ENCODE measurements at regions of chr9 and their contacts with region 1.

Region 1: DNA sequence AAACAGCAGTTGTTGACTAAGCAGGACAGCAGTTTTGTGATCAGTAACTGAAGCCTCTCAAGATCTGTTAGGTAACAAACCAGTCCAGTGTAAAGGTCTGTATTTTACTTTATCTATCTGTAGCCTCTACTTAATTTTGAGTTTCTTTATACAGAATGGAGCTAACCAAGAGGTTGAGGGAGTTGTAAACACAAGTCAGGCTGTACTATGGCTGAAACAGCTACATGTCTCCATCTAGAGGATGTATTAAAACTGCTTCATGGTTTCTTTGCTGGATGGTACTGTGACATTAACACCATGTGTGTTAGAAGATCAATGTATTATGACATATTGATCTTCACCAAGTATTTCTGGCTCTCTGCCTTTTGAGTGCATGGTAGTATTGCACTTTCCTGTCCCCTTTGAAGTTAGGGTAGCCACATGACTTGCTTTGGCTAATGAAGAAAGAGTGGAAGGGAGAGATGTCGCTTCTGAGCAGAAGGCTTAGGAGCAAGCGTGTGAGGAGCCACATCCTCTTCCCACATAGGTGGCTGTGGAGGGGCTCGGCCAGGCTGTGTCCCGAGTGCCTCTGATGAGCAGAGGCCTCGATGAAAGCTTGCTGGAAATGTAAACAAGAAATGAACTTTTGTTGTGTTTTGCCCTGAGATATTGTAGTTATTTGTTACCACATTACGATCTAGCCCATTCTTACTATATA is 105.6 kb upstream of the PCA3 start:
- DNase-seq: peak; percentile 48
- H3K4me3 ChIP-seq: no peak overlapping the region
- H3K27ac ChIP-seq: no peak overlapping the region
- H3K4me1 ChIP-seq: peaks cover 15% of the 10 kb centered on the region
- H3K27me3 ChIP-seq: no peaks in the 10 kb centered on the region
- CTCF ChIP-seq: peak; percentile 76 to 80

Region 2: DNA sequence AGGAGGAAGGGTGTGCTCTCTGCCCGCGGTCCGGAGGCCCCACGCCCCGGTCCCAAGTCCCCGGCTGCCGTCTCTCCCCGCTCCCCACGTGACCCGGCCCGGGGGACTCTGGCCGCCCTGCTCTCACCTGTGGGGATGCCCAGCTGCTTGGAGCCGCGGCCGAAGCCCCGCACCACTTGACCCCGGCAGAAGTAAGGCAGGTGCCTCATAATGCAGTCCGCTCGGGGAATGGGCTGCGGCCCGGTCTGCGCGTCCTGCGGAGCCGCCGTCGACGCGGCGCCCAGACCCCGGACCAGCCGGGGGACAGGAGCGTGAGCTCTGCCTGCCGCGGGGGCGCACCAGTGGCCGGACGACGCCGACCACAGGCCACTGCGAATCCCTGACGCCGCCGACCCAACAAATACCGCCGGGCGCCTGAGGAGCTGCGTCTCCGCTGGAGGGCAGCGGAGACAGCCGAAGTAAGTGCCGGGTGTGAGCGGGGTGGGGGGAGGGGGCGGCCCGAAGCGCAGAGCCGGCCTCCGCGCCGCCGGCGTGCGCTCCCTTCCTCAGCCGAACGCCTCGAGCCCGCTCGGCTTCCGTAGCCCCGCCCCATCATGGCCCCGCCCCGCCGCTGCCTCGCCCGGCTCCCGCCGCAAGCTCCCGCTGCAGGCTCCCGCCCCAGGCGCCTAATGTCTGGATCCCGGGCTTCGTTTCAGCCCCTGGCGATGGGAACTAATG is 264.6 kb before region 1 on chr9 and contains the start of gene RFK:
- CTCF ChIA-PET with region 1: interaction called, 13 read pairs
- dilution Hi-C with region 1: no loop called
- in situ Hi-C with region 1: no loop called
- intact Hi-C with region 1: loop called (anchors 2 kb)
- DNase-seq: peak; percentile 91
- H3K4me3 ChIP-seq: peak within 1 kb of the TSS; percentile 73 to 93 (median 91)
- H3K27ac ChIP-seq: peak within 1 kb of the TSS; percentile 95
- H3K4me1 ChIP-seq: peaks cover 8% of the 10 kb centered on the region
- H3K27me3 ChIP-seq: no peaks in the 10 kb centered on the region
- CTCF ChIP-seq: peak; percentile 14 to 48
- total RNA-seq, gene RFK: 18.2 to 32.3 TPM

Region 3: DNA sequence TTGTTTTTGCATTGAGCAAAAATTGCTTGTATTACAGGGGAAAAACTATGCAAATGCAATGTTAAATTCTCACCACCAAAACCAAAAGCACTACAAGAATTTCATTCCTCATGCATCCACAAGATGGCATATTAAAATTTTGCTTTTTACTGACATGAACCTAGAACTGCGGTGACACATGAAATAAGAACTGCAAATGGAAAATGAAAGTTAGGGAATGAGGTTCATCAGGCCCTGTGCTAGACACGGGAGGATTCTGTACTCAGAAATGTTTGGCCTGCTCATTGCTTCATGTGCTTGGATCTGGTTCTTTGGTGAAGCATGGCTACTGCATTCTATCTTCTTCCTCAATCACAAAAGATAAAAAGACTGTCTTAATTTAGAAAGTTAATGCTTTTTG is 255.3 kb before region 1 on chr9:
- CTCF ChIA-PET with region 1: no interaction called
- dilution Hi-C with region 1: no loop called
- in situ Hi-C with region 1: no loop called
- intact Hi-C with region 1: loop called (anchors 1 kb)
- DNase-seq: peak; percentile 69
- H3K4me3 ChIP-seq: peak overlapping the region in 2 of 3 experiments; percentile 1 to 17
- H3K27ac ChIP-seq: peak overlapping the region; percentile 1
- H3K4me1 ChIP-seq: peaks cover 3% of the 10 kb centered on the region
- H3K27me3 ChIP-seq: no peaks in the 10 kb centered on the region
- CTCF ChIP-seq: peak; percentile 51 to 60

Region 4: DNA sequence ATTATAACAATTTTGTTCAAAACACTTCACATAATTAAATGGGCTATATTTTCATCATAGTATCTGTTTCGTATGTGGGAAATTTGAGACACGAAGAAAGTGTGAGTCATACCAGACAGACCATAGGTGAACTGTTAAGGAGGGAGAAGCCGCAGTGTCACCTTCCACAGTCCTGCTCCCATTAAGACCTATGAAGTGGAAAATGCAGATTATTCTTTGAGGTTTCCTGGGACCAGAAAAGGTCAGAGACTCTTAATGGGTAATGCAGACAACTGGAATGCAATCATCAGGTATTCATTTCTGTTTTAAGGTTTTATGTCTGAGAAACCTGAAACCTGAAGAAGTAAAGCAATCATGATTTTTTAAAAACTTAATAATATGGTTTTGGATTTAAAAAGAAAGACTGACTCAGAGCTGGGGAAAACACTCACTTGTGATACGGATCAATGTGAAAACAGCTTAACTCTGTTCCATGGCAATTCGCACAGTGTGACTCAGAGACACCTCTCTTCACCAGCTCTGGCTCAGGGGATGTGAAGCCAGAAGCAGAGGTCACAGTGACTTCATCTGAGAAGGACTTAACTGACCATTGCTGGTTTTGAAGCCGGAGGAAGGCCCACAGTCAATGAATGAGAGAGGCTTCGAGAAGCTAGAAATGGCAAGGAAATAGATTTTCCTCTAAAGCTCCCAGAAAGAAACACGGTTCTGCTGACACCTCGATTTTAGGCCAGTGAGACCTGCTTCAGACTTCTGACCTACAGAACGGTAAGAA is 216.9 kb before region 1 on chr9:
- CTCF ChIA-PET with region 1: no interaction called
- dilution Hi-C with region 1: no loop called
- in situ Hi-C with region 1: loop called in 1 of 2 experiments (anchors 5 kb)
- intact Hi-C with region 1: no loop called
- DNase-seq: peak; percentile 40
- H3K4me3 ChIP-seq: no peak overlapping the region
- H3K27ac ChIP-seq: no peak overlapping the region
- H3K4me1 ChIP-seq: no peaks in the 10 kb centered on the region
- H3K27me3 ChIP-seq: no peaks in the 10 kb centered on the region
- CTCF ChIP-seq: no peak

Region 5: DNA sequence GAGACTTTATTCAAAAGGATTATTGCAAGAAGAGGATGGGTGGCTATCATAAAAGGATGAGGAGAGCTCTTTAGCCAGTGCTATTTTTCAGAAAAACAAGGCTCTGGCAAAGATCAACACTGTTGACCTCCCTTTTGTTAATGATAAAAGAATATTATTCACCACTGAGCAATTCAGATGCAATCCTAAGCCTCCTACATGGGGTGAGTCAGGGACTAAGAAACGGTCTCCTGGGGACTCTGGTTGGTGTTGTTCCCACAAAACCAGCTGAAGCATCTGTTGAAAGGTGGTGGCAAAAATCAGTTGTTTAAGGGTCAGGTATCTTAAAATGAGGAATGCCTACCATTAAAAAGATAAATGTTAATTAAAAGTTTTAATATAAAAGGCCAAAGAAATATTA is 207.4 kb before region 1 on chr9:
- CTCF ChIA-PET with region 1: no interaction called
- dilution Hi-C with region 1: no loop called
- in situ Hi-C with region 1: loop called (anchors 5 kb)
- intact Hi-C with region 1: loop called (anchors 1 kb)
- DNase-seq: peak; percentile 57
- H3K4me3 ChIP-seq: no peak overlapping the region
- H3K27ac ChIP-seq: no peak overlapping the region
- H3K4me1 ChIP-seq: peaks cover 13% of the 10 kb centered on the region
- H3K27me3 ChIP-seq: no peaks in the 10 kb centered on the region
- CTCF ChIP-seq: no peak

Region 6: GRCh38 chr9:76458903-76459690 is 199.6 kb before region 1 on chr9 and contains the start of gene GCNT1:
- CTCF ChIA-PET with region 1: no interaction called
- dilution Hi-C with region 1: no loop called
- in situ Hi-C with region 1: loop called in 1 of 2 experiments (anchors 5 kb)
- intact Hi-C with region 1: loop called (anchors 1 kb)
- DNase-seq: peak; percentile 95
- H3K4me3 ChIP-seq: peak within 1 kb of the TSS; percentile 89 to 98 (median 97)
- H3K27ac ChIP-seq: peak within 1 kb of the TSS; percentile 95
- H3K4me1 ChIP-seq: peaks cover 14% of the 10 kb centered on the region
- H3K27me3 ChIP-seq: no peaks in the 10 kb centered on the region
- CTCF ChIP-seq: peak; percentile 2 to 49
- total RNA-seq, gene GCNT1: 39.8 to 97.0 TPM

Region 7: GRCh38 chr9:76486151-76486550 is 172.5 kb before region 1 on chr9:
- CTCF ChIA-PET with region 1: no interaction called
- dilution Hi-C with region 1: no loop called
- in situ Hi-C with region 1: no loop called
- intact Hi-C with region 1: no loop called
- DNase-seq: no peak
- H3K4me3 ChIP-seq: no peak overlapping the region
- H3K27ac ChIP-seq: no peak overlapping the region
- H3K4me1 ChIP-seq: no peaks in the 10 kb centered on the region
- H3K27me3 ChIP-seq: no peaks in the 10 kb centered on the region
- CTCF ChIP-seq: no peak

Region 8: GRCh38 chr9:76571288-76571687 is 87.4 kb before region 1 on chr9:
- CTCF ChIA-PET with region 1: no interaction called
- dilution Hi-C with region 1: no loop called
- in situ Hi-C with region 1: no loop called
- intact Hi-C with region 1: loop called (anchors 2 kb)
- DNase-seq: no peak
- H3K4me3 ChIP-seq: peak overlapping the region; percentile 46 to 61 (median 53)
- H3K27ac ChIP-seq: peak overlapping the region; percentile 81
- H3K4me1 ChIP-seq: peaks cover 3% of the 10 kb centered on the region
- H3K27me3 ChIP-seq: no peaks in the 10 kb centered on the region
- CTCF ChIP-seq: no peak

Region 9: GRCh38 chr9:76610011-76610352 is 48.7 kb before region 1 on chr9:
- CTCF ChIA-PET with region 1: no interaction called
- dilution Hi-C with region 1: no loop called
- in situ Hi-C with region 1: no loop called
- intact Hi-C with region 1: no loop called
- DNase-seq: no peak
- H3K4me3 ChIP-seq: no peak overlapping the region
- H3K27ac ChIP-seq: no peak overlapping the region
- H3K4me1 ChIP-seq: no peaks in the 10 kb centered on the region
- H3K27me3 ChIP-seq: no peaks in the 10 kb centered on the region
- CTCF ChIP-seq: no peak

Region 10: GRCh38 chr9:76912631-76913275 is 254.1 kb after region 1 on chr9:
- CTCF ChIA-PET with region 1: no interaction called
- dilution Hi-C with region 1: no loop called
- in situ Hi-C with region 1: no loop called
- intact Hi-C with region 1: no loop called
- DNase-seq: peak; percentile 35
- H3K4me3 ChIP-seq: no peak overlapping the region
- H3K27ac ChIP-seq: no peak overlapping the region
- H3K4me1 ChIP-seq: peaks cover 3% of the 10 kb centered on the region
- H3K27me3 ChIP-seq: peaks cover 8% of the 10 kb centered on the region
- CTCF ChIP-seq: no peak

Region 11: DNA sequence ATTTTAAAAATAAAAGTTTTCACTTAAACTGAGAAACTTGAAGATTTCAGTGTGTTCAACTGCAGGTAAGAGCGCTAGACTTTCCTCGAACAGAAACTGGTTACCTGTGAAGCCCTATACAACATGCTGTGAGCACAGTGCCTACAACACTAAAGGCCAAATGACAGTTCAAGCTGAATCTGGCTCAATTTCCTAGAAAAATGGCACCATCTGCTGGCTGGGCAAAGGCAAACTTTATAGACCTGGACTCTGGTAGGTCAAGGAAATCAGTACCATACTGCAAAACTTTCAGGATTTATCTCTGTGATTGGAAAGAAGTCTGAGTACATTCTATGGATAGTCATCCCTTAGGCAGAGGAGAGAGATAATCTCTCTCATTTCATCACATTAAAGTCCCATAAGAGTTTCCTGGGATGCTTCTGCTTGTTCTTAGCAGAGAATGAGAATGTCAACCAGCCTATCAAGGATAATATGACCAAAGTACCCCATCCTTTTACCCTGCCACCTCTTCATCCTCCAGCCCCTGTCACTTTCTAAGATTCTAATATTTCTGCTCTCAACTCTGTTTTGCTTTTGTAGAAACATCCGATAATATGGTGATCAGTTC is 329.0 kb after region 1 on chr9:
- CTCF ChIA-PET with region 1: no interaction called
- dilution Hi-C with region 1: no loop called
- in situ Hi-C with region 1: no loop called
- intact Hi-C with region 1: no loop called
- DNase-seq: peak; percentile 35
- H3K4me3 ChIP-seq: no peak overlapping the region
- H3K27ac ChIP-seq: no peak overlapping the region
- H3K4me1 ChIP-seq: no peaks in the 10 kb centered on the region
- H3K27me3 ChIP-seq: no peaks in the 10 kb centered on the region
- CTCF ChIP-seq: peak; percentile 58 to 75